Activated naive CD4-positive, alpha-beta T cell treated with anti-CD3 and anti-CD28 coated beads for 36 hours (primary cell): ENCODE measurements at regions of chr9 and their contacts with region 1.

Region 1: GRCh38 chr9:137240861-137241489 is at the start of gene TUBB4B:
- DNase-seq: peak; percentile 99
- H3K4me3 Mint-ChIP-seq: peak within 1 kb of the TSS; percentile 88
- H3K27ac Mint-ChIP-seq: peak within 1 kb of the TSS; percentile 94
- H3K4me1 Mint-ChIP-seq: peaks cover 34% of the 10 kb centered on the region
- H3K27me3 Mint-ChIP-seq: no peaks in the 10 kb centered on the region
- total RNA-seq, gene TUBB4B: 193 to 196 TPM

Region 2: GRCh38 chr9:136410500-136411287 is 830.3 kb before region 1 on chr9 and contains the starts of genes ENTR1 and PMPCA:
- CTCF ChIA-PET with region 1: no interaction called
- intact Hi-C with region 1: loop called (anchors 5 kb)
- DNase-seq: peak; percentile 98
- H3K4me3 Mint-ChIP-seq: peak within 1 kb of the TSS; percentile 90
- H3K27ac Mint-ChIP-seq: peak within 1 kb of the TSS; percentile 95
- H3K4me1 Mint-ChIP-seq: peaks cover 56% of the 10 kb centered on the region
- H3K27me3 Mint-ChIP-seq: no peaks in the 10 kb centered on the region
- total RNA-seq, gene ENTR1: 85.7 to 91.6 TPM
- total RNA-seq, gene PMPCA: 69.2 to 73.7 TPM

Region 3: GRCh38 chr9:137129456-137130175 is 111.4 kb before region 1 on chr9:
- CTCF ChIA-PET with region 1: interaction called, 10 read pairs
- intact Hi-C with region 1: loop called (anchors 1 kb)
- DNase-seq: peak; percentile 92
- H3K4me3 Mint-ChIP-seq: peak overlapping the region; percentile 91
- H3K27ac Mint-ChIP-seq: peak overlapping the region; percentile 74
- H3K4me1 Mint-ChIP-seq: peaks cover 17% of the 10 kb centered on the region
- H3K27me3 Mint-ChIP-seq: peaks cover 5% of the 10 kb centered on the region

Region 4: GRCh38 chr9:137188490-137189296 is 52.3 kb before region 1 on chr9 and contains the starts of genes ANAPC2 and SSNA1:
- CTCF ChIA-PET with region 1: interaction called, 7 read pairs
- intact Hi-C with region 1: loop called (anchors 5 kb)
- DNase-seq: peak; percentile 92
- H3K4me3 Mint-ChIP-seq: peak within 1 kb of the TSS; percentile 92
- H3K27ac Mint-ChIP-seq: peak within 1 kb of the TSS; percentile 88
- H3K4me1 Mint-ChIP-seq: peaks cover 39% of the 10 kb centered on the region
- H3K27me3 Mint-ChIP-seq: no peaks in the 10 kb centered on the region
- total RNA-seq, gene ANAPC2: 34.8 to 36.6 TPM
- total RNA-seq, gene SSNA1: 48.2 to 49.9 TPM

Region 5: GRCh38 chr9:137254624-137255447 is 13.9 kb after region 1 on chr9 and contains the start of gene NELFB:
- CTCF ChIA-PET with region 1: interaction called, 13 read pairs
- intact Hi-C with region 1: loop called (anchors 1 kb)
- DNase-seq: peak; percentile 95
- H3K4me3 Mint-ChIP-seq: peak within 1 kb of the TSS; percentile 85
- H3K27ac Mint-ChIP-seq: peak within 1 kb of the TSS; percentile 75
- H3K4me1 Mint-ChIP-seq: peaks cover 18% of the 10 kb centered on the region
- H3K27me3 Mint-ChIP-seq: no peaks in the 10 kb centered on the region
- total RNA-seq, gene NELFB: 47.0 to 47.1 TPM